ENCODE measurements at regions of chr19 and their contacts with region 1.

Region 1: DNA sequence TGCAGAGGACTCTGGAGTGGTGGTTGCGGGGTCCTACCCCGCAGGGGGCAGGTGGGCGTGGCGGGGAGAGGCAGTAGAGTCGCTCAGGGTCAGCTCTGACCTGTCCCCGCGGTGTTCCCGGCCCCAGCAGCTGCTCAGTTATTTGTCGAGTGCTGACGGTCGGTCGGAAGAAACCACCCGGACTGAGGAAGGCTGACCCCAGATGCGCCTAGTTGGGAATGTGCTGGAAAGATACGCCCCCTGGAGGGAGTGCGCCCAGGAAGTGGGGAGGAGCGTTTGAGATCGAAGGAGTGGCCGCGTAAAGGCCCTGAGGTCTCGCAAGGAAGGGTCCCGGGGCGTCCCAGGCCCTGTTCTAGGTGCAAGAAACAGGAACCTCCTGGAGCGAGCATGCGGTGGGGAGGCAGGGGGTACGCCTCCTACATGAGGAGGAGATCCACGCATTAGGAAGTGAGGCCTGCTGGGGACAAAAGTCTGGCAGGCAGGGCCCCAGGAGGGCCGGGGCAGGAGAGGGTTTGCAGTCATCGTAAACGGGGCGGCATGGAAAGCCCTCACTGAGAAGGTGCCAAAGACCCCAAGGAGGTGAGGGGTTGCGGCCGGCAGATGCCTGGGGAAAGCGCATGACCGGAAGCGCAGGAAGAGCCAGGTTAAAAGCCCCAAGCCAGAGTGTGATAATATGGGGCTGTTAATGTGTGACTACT is 9.2 kb downstream of the CCDC8 start:
- DNase-seq: no peak
- H3K4me3 ChIP-seq: peak overlapping the region; percentile 28
- H3K27me3 ChIP-seq: no peaks in the 10 kb centered on the region; the same call in 1 of the 2 replicates
- CTCF ChIP-seq: peak; percentile 51; the same call in 1 of the 2 replicates

Region 2: GRCh38 chr19:46339446-46339845 is 64.8 kb before region 1 on chr19:
- CTCF ChIA-PET with region 1: no interaction called
- POLR2A ChIA-PET with region 1: no interaction called
- DNase-seq: no peak
- H3K4me3 ChIP-seq: no peak overlapping the region
- H3K27me3 ChIP-seq: peaks cover 6% of the 10 kb centered on the region
- CTCF ChIP-seq: no peak

Region 3: DNA sequence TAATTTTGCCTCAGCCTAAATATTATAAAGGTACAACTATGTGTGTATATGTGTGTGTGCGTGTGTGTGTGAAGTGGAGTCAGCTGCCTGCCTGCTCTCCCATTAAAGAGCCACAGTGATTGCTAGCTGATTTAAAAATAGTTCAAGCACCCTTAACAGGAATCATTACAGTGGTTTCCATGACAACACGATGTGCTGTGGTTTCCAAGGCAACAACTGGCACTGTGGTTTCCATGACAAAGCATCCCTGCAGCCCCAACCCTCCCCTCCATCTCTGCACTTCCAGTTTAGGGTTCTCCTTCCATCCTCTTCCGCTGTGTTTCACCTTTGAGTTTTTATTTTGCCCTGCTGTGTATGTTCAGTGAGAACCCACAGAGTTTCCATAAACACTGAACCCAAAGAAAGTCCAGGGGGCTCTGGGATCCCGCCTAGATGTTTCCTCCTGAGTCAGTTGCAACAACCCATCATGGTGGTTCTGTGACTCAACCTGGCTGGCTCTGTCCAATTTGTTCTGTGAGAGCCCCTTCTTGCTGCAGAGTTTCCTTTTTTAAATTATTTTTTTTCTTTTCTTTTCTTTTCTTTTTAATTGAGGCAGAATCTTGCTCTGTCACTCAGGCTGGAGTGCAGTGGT is 74.3 kb after region 1 on chr19:
- CTCF ChIA-PET with region 1: interaction called, 55 read pairs
- POLR2A ChIA-PET with region 1: no interaction called
- DNase-seq: no peak
- H3K4me3 ChIP-seq: no peak overlapping the region
- H3K27me3 ChIP-seq: no peaks in the 10 kb centered on the region
- CTCF ChIP-seq: no peak

Region 4: GRCh38 chr19:46487802-46488445 is 83.7 kb after region 1 on chr19:
- CTCF ChIA-PET with region 1: interaction called, 86 read pairs
- POLR2A ChIA-PET with region 1: no interaction called
- DNase-seq: no peak
- H3K4me3 ChIP-seq: peak overlapping the region; percentile 20
- H3K27me3 ChIP-seq: peaks cover 9% of the 10 kb centered on the region; the same call in 1 of the 2 replicates
- CTCF ChIP-seq: peak; percentile 95

Measured in BJ (cell line).